Panc1 (cell line): ENCODE measurements at regions of chr15 and their contacts with region 1.

Region 1: GRCh38 chr15:74635228-74635627 is 19.6 kb downstream of the CLK3 start:
- DNase-seq: peak; percentile 69
- ATAC-seq: peak; percentile 84
- H3K4me3 ChIP-seq: no peak overlapping the region
- H3K27ac ChIP-seq: no peak overlapping the region
- H3K4me1 ChIP-seq: no peaks in the 10 kb centered on the region
- H3K27me3 ChIP-seq: no peaks in the 10 kb centered on the region
- CTCF ChIP-seq: peak; percentile 90

Region 2: GRCh38 chr15:74373731-74374647 is 261.2 kb before region 1 on chr15:
- CTCF ChIA-PET with region 1: no interaction called
- POLR2A ChIA-PET with region 1: no interaction called
- in situ Hi-C with region 1: no loop called
- intact Hi-C with region 1: loop called (anchors 5 kb)
- DNase-seq: no peak
- ATAC-seq: peak; percentile 95
- H3K4me3 ChIP-seq: peak overlapping the region; percentile 62 to 67
- H3K27ac ChIP-seq: peak overlapping the region; percentile 60; the same call in 1 of the 2 replicates
- H3K4me1 ChIP-seq: peaks cover 9% of the 10 kb centered on the region
- H3K27me3 ChIP-seq: no peaks in the 10 kb centered on the region; the same call in 1 of the 2 replicates
- CTCF ChIP-seq: peak; percentile 92

Region 3: DNA sequence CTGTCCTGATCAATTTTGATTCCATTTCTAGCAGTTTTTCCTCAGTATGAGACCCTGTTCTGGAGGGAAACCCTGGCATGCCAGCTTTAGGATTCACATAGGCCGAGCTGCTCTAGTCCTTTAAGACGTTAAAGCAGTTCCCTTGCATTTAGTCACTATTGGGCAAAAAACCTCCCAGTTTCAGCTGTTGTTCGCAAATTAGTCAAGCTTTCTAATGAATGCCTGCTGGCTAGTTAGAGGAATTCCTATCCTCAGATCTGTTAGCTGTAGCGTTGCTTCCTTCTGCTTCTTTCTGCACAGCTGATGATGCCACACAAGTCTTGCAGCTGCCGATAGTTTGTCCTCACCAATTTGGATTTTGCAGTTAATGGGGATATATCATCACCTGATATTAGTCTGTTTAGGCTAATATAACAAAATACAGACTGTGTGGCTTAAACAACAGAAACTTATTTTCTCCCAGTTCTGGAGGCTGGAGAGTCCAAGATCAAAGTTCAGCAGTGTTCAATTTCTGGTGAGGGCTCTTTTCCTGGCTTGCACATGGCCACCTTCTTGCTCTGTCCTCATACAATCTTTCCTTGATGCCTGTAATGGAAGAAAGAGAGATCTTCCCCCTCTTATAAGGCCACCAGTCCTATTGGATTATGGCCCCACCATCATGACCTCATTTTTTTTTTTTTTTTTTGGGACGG is 166.7 kb before region 1 on chr15:
- CTCF ChIA-PET with region 1: interaction called, 11 read pairs
- POLR2A ChIA-PET with region 1: no interaction called
- in situ Hi-C with region 1: no loop called
- intact Hi-C with region 1: no loop called
- DNase-seq: no peak
- ATAC-seq: no peak
- H3K4me3 ChIP-seq: no peak overlapping the region
- H3K27ac ChIP-seq: no peak overlapping the region
- H3K4me1 ChIP-seq: no peaks in the 10 kb centered on the region
- H3K27me3 ChIP-seq: no peaks in the 10 kb centered on the region
- CTCF ChIP-seq: no peak

Region 4: DNA sequence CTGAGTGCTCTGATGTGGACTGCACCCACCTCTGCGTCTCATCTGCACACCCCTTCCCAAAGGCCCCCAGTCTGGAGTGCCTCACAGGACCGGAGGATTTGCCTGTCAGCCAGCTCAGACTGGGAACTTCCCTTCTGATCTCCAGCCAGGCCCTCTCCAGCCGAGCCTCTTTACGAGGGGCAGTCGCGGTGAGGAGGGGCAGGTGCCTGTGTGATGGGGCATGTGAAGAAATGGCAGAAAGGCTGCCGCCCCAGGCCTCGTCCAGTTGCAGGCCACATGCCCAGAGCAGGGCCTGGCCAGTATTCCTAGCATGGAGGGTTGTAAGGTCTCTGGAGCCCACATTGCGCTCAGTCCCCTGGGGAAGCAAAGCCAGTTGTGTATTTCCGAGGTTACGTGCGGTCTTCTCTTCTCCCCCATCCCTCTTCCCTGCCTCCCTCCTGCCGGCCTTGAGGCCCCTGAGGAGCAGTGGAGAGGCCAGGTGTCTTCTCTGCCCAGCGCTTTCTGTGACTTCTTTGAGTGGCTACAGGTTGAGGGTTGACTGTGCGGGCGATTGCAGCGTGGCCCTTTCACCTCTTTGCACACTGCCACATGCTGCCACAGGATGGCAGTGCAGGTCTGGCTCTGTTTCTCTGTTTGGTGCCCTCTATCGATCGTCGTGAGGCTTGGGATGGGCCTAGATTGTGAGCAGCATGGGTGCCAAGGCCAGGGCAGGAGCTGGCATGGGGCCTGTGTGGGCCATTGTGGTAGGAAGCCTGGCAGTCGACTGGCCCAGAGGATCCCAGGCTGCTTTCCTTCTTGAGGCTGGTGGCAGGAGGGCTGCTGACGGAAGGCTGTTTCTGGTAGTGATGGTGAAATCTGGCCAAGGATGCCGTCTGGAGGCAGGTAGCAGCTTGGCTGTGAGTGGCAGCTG is 14.3 kb before region 1 on chr15:
- CTCF ChIA-PET with region 1: interaction called, 10 read pairs
- POLR2A ChIA-PET with region 1: no interaction called
- in situ Hi-C with region 1: no loop called
- intact Hi-C with region 1: no loop called
- DNase-seq: peak; percentile 64
- ATAC-seq: peak; percentile 88
- H3K4me3 ChIP-seq: no peak overlapping the region
- H3K27ac ChIP-seq: no peak overlapping the region; the same call in 1 of the 2 replicates
- H3K4me1 ChIP-seq: peaks cover 21% of the 10 kb centered on the region
- H3K27me3 ChIP-seq: no peaks in the 10 kb centered on the region
- CTCF ChIP-seq: peak; percentile 98

Region 5: GRCh38 chr15:74752491-74753020 is 117.3 kb after region 1 on chr15:
- CTCF ChIA-PET with region 1: interaction called, 10 read pairs
- POLR2A ChIA-PET with region 1: no interaction called
- in situ Hi-C with region 1: loop called (anchors 25 kb)
- intact Hi-C with region 1: no loop called
- DNase-seq: no peak
- ATAC-seq: no peak; the same call in 1 of the 2 replicates
- H3K4me3 ChIP-seq: no peak overlapping the region
- H3K27ac ChIP-seq: no peak overlapping the region
- H3K4me1 ChIP-seq: no peaks in the 10 kb centered on the region
- H3K27me3 ChIP-seq: no peaks in the 10 kb centered on the region
- CTCF ChIP-seq: no peak

Region 6: DNA sequence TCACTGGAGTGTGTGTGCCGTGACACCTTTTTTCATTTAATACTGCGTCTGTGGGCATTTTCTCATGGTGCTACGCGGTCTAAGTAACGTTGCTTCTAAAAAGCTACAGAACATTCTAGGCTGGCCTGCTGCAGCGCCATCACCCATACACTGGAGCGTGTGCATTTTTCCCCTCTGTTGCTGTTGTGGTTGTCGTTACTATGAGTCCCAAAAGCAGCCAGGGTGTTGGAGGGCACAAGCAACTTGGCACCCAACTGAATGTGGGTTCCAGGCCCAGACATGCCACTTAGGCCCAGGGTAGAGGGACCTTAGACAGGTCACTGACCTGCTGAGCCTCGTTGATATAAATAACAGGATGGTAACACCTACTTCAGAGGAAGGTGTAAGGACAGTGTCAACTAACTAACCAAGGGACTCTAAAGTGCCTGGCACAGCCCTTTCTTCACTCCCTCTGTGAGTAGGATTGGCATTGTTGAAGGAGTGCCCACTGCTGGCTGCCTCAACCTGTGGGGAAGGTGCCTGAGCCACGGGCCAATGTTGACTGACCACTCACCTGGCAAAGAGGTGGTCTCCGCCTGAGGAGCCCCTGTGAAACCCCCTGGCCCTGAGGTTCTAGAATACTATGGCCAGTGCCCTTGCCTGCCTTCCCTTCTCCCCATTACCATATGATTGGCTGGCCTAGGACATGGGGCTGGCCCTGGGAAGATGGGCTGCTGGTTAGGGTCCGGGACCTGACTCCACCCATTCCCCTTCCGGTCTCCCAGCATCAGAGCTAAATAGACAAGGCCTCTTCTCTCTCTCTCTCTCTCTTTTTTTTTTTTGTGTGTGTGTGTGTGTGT is 150.2 kb after region 1 on chr15:
- CTCF ChIA-PET with region 1: no interaction called
- POLR2A ChIA-PET with region 1: no interaction called
- in situ Hi-C with region 1: no loop called
- intact Hi-C with region 1: no loop called
- DNase-seq: no peak
- ATAC-seq: no peak
- H3K4me3 ChIP-seq: no peak overlapping the region
- H3K27ac ChIP-seq: no peak overlapping the region
- H3K4me1 ChIP-seq: peaks cover 64% of the 10 kb centered on the region
- H3K27me3 ChIP-seq: no peaks in the 10 kb centered on the region
- CTCF ChIP-seq: no peak